ENCODE measurements at regions of chr6 and their contacts with region 1.

Region 1: DNA sequence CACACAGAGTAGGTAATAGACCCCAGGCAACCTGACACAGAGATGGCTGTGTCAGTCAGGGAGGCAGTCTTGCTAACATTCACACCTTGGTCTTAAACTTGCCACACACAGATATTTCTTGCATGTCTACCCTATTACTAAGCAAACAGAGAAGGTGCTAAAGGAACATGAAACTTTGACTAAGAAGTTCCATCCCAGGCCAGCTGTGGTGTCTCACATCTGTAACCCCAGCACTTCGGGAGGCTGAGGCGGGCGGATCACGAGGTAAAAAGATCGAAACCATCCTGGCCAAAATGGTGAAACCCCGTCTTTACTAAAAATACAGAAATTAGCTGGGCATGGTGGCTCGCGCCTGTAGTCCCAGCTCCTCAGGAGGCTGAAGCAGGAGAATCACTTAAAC is 222.4 kb upstream of the JARID2 start:
- DNase-seq: peak; percentile 85
- ATAC-seq: peak; percentile 98
- H3K4me3 Mint-ChIP-seq: peak overlapping the region; percentile 37
- H3K27ac Mint-ChIP-seq: peak overlapping the region; percentile 89
- H3K4me1 Mint-ChIP-seq: peaks cover 22% of the 10 kb centered on the region
- H3K27me3 Mint-ChIP-seq: no peaks in the 10 kb centered on the region

Region 2: GRCh38 chr6:14241255-14242070 is 782.0 kb before region 1 on chr6:
- CTCF ChIA-PET with region 1: no interaction called
- POLR2A ChIA-PET with region 1: no interaction called
- intact Hi-C with region 1: no loop called
- DNase-seq: no peak
- ATAC-seq: no peak
- H3K4me3 Mint-ChIP-seq: no peak overlapping the region
- H3K27ac Mint-ChIP-seq: no peak overlapping the region
- H3K4me1 Mint-ChIP-seq: no peaks in the 10 kb centered on the region
- H3K27me3 Mint-ChIP-seq: no peaks in the 10 kb centered on the region

Region 3: DNA sequence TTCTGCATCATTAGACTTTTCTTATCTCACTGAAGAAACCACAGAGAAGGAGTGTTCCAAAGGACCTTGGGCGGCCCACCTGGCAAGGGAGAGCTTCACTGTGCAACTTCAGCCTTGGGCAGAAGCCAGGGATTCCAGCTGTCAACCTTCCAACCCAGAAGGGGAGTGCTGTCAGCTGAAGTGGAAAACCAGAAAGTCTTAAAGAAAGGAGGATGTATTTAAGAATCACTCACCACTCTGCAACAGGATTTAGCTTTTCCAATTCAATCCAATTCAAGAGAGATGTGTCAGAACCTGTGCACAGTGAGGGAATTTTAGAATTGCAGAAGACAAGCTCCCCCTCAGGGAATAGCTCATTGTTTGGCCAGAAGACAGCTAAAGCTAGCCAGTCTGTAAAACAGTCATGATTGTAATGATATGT is 352.2 kb before region 1 on chr6:
- CTCF ChIA-PET with region 1: no interaction called
- POLR2A ChIA-PET with region 1: no interaction called
- intact Hi-C with region 1: loop called in 1 of 2 experiments (anchors 1 kb)
- DNase-seq: no peak
- ATAC-seq: no peak
- H3K4me3 Mint-ChIP-seq: no peak overlapping the region
- H3K27ac Mint-ChIP-seq: no peak overlapping the region
- H3K4me1 Mint-ChIP-seq: peaks cover 42% of the 10 kb centered on the region
- H3K27me3 Mint-ChIP-seq: no peaks in the 10 kb centered on the region

Region 4: GRCh38 chr6:14754751-14755513 is 268.5 kb before region 1 on chr6:
- CTCF ChIA-PET with region 1: no interaction called
- POLR2A ChIA-PET with region 1: interaction called, 6 read pairs
- intact Hi-C with region 1: loop called in 1 of 2 experiments (anchors 1 kb)
- DNase-seq: peak; percentile 82
- ATAC-seq: peak; percentile 81
- H3K4me3 Mint-ChIP-seq: peak overlapping the region; percentile 40
- H3K27ac Mint-ChIP-seq: peak overlapping the region; percentile 96
- H3K4me1 Mint-ChIP-seq: peaks cover 60% of the 10 kb centered on the region
- H3K27me3 Mint-ChIP-seq: no peaks in the 10 kb centered on the region

Region 5: GRCh38 chr6:14816116-14816859 is 207.2 kb before region 1 on chr6:
- CTCF ChIA-PET with region 1: no interaction called
- POLR2A ChIA-PET with region 1: no interaction called
- intact Hi-C with region 1: loop called in 1 of 2 experiments (anchors 1 kb)
- DNase-seq: no peak
- ATAC-seq: no peak
- H3K4me3 Mint-ChIP-seq: no peak overlapping the region
- H3K27ac Mint-ChIP-seq: no peak overlapping the region
- H3K4me1 Mint-ChIP-seq: peaks cover 18% of the 10 kb centered on the region
- H3K27me3 Mint-ChIP-seq: no peaks in the 10 kb centered on the region

Region 6: GRCh38 chr6:15001326-15001910 is 22.0 kb before region 1 on chr6:
- CTCF ChIA-PET with region 1: no interaction called
- POLR2A ChIA-PET with region 1: no interaction called
- intact Hi-C with region 1: no loop called
- DNase-seq: no peak
- ATAC-seq: no peak
- H3K4me3 Mint-ChIP-seq: no peak overlapping the region
- H3K27ac Mint-ChIP-seq: no peak overlapping the region
- H3K4me1 Mint-ChIP-seq: no peaks in the 10 kb centered on the region
- H3K27me3 Mint-ChIP-seq: no peaks in the 10 kb centered on the region

Region 7: DNA sequence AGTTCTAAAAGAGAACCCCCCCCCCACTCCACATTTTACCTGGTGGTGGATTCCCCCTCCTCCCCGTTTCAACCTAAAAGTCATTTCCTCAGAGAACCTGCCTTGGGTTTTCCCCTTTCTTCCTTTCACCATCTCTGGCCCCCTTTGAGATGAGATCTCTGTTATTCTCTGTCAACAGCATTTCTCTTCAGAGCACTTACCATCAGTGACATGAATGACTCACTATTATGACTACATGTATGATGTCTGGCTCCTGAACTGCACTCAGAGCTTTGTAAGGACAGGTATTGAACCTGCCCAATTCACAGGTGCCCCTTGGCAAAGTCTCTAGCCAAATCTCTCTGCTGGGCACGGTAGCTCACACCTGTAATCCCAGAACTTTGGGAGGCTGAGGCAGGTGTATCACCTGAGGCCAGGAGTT is 161.0 kb after region 1 on chr6:
- CTCF ChIA-PET with region 1: no interaction called
- POLR2A ChIA-PET with region 1: no interaction called
- intact Hi-C with region 1: loop called in 1 of 2 experiments (anchors 1 kb)
- DNase-seq: peak; percentile 62
- ATAC-seq: peak; percentile 98
- H3K4me3 Mint-ChIP-seq: peak overlapping the region; percentile 23
- H3K27ac Mint-ChIP-seq: peak overlapping the region; percentile 96
- H3K4me1 Mint-ChIP-seq: peaks cover 23% of the 10 kb centered on the region
- H3K27me3 Mint-ChIP-seq: no peaks in the 10 kb centered on the region